GM13976 (cell line): ENCODE measurements at regions of chr17 and their contacts with region 1.

Region 1: GRCh38 chr17:64129764-64130558 is at the start of gene ERN1:
- DNase-seq: peak; percentile 95
- CTCF ChIP-seq: no peak

Region 2: DNA sequence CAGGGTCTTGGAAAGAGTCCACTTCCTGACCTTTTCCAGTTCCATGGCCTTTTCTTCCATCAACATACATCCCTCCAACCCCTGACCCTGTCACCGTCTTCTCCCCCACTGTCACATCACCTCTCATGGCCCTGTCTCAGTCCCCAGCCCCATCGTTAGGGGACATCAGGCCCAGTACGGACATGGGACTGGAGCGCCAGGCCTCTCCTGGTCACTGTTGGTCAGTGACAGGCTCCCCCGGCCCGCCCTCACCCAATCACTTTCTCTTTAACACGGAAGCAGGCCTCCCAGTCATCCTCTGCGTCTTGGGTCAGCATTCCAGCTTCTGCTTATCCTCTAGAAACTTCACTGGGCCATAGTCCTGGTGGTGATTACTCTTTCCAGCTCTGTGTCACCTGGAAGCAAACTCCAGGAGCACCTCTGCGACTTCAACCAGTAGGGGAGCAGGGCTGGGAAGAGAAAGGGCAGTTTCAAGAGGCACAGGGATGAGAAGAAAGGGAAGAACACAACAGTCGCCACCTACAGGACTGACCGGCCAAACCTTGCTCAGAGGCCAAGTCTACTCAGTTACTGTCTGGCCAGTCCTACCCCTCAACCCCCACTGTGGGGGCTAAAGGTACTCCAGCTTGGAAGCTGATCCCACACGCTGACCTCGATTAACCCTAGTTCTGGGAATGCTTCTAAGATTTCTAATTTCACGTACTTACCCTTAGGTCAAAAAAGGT is 93.6 kb before region 1 on chr17:
- in situ Hi-C with region 1: no loop called
- DNase-seq: no peak
- CTCF ChIP-seq: no peak

Region 3: GRCh38 chr17:64073771-64074703 is 55.9 kb before region 1 on chr17:
- in situ Hi-C with region 1: loop called (anchors 10 kb)
- DNase-seq: peak; percentile 69
- CTCF ChIP-seq: no peak